Left ventricle myocardium superior (tissue), 1 donor: ENCODE measurements at regions of chr10 and their contacts with region 1.

Region 1: GRCh38 chr10:60099998-60100747 is 193.8 kb upstream of the CCDC6 start:
- DNase-seq: no peak
- ATAC-seq: peak; percentile 67

Region 2: GRCh38 chr10:60021324-60021723 is 78.8 kb before region 1 on chr10:
- intact Hi-C with region 1: no loop called
- DNase-seq: no peak
- ATAC-seq: no peak

Region 3: DNA sequence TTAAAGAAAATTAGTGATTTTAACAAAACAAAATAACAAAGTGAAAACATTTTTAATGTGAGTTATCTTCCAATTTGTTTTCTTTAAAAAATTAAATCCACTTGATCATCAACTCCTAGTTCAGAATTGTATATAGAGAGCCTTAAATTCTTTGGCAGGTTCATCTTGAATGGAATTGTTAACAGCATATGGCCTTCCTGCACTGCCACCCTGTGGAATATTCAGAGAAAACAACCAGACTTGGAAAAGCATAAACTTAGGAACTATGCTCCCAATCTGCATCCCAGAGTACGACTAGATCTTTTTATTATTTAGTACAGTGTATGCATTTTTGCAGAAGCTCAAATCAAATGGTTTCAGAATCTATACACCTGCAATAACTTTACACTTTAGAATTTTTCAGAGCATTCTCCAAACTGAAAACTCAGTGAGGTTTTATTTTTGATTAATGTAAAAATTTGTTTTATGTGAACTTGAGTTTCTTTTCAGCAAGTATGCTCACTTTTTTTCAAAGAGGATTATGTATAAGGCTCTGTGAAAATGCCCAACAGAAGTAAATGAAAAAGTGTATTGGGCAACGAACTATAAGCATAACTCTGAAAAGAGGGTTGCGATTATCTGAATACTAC is 334.4 kb after region 1 on chr10:
- intact Hi-C with region 1: loop called (anchors 10 kb)
- DNase-seq: no peak
- ATAC-seq: peak; percentile 72

Region 4: DNA sequence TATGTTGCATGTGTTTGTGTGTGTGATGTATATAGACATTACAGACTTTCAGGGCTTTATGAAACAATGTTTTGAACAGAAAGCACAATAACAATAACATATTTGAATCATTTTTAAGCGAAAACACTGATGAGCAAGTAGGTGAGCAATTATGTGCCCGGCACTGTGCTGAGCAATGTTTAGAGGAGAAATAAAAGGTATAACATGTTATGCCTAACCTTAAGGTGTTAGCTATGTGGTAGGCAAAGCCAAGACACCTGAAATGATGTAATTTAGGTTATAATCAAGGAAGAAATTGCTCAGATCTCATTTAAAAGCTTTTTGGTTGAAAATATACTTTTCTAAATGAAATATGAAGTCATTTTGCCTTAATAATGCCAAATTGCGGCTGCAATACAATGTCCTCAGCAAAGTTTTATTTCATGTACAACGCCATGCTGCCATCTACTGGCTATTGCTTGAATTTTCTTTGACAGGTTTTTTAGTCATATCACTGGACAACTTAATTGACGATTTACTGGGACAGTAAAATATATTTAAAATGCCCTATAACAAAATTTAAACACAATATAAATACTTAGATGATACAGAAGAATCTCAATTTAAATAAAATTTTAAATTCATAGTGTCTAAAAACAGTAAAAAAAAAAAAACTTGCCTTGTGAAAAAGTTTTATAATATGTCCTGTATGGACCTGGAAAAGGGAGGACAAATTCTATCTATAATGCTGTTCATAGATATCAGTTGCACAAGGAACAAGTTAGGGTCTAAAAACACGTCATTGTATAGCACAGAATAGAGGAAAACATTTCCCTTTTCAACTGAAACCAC is 547.0 kb after region 1 on chr10:
- intact Hi-C with region 1: loop called (anchors 10 kb)
- DNase-seq: no peak
- ATAC-seq: no peak